ENCODE measurements at regions of chr9 and their contacts with region 1.

Region 1: DNA sequence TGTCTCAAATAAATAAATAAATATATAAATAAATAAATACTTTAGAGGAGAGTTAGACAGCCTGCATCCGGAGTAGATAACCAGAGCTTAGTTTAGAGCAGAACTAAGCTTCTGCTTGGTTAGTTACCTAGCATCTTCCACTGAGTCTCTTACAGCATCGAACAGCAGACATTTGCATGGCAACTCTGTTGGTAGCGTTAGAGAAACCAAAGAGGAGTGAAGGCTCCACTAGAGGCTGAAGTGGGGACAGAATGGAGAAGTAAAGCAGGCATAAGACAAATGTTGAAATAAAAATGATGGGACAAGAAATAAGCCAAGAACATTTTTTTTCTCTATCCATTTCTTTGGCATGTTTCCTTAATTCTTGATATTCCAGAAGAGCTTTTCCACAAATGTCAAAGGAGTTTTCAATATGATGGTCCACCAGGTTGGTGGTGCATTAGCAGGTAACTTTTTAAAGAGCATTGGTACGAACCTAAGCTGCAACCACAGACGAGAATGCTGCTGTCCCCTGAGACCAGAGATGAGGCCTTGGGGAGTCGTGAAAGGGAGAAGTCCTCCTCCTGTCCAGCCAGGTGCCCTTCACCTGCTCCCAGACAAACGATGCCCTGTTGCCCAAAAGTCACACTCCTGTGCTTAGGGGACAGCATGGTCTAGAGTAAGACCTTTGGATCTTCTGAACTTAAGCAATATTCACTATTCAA is 438.3 kb downstream of the DIRAS2 start:
- H3K4me3 Mint-ChIP-seq: no peak overlapping the region
- H3K27ac Mint-ChIP-seq: no peak overlapping the region
- H3K4me1 Mint-ChIP-seq: peaks cover 8% of the 10 kb centered on the region
- H3K27me3 Mint-ChIP-seq: peaks cover 7% of the 10 kb centered on the region

Region 2: DNA sequence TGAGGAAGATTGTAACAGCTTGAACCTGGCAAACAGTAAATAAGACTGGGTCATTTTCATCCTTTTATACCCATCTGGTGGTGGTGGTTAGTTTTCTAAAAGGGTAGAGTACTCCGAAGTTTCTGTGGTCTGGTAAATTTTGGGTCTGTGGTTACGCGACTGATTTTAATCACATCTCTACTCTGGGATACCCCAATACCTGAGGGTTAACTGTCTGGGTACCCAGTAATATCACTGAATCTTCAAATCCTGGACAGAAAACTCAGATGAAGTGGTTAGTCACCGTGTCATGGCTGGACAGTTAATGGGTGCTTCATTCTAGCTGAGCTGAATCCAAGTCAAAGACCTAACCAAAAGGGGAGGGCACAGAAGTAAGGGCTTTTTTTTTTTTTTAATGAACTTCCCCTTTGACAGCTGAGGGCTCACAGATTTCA is 125.3 kb before region 1 on chr9:
- intact Hi-C with region 1: no loop called
- H3K4me3 Mint-ChIP-seq: no peak overlapping the region
- H3K27ac Mint-ChIP-seq: no peak overlapping the region
- H3K4me1 Mint-ChIP-seq: peaks cover 15% of the 10 kb centered on the region
- H3K27me3 Mint-ChIP-seq: peaks cover 31% of the 10 kb centered on the region

Region 3: GRCh38 chr9:90169490-90169889 is 34.8 kb before region 1 on chr9:
- intact Hi-C with region 1: loop called (anchors 2 kb)
- H3K4me3 Mint-ChIP-seq: no peak overlapping the region
- H3K27ac Mint-ChIP-seq: no peak overlapping the region
- H3K4me1 Mint-ChIP-seq: peaks cover 14% of the 10 kb centered on the region
- H3K27me3 Mint-ChIP-seq: peaks cover 2% of the 10 kb centered on the region